Activated CD8-positive, alpha-beta memory T cell treated with anti-CD3 and anti-CD28 coated beads, Interleukin-2, amount 10 ng/mL, durations not matched to agents 7 days and 5 days (primary cell): ENCODE measurements at regions of chr6 and their contacts with region 1.

Region 1: DNA sequence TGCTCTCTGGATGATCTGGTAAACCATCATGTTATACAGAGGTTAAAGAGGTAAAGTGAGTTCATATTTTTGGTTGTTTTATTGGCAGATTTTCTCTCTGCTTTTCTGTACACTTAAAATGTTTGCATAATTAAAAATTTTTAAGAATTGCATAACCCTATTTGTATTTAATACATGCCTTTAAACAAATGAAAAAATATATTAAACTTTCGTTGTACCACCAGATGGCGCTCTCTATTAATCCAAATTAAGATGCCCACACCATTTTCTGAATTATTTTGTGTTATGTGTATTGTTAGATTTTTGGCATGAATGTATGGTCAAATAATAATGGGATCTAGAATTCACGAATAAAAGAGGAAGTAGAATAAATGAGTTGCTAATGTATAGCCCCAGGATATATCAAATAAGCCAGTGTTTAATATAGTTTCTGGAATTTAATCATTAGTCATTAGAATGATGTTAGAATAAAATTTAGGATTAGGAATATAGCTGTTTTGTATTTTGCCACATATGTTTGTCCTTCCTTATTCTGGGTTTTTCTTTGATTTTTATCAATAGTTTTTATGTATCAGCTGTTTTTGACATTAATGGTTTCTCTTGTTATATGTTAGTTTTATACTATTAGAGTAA is 38.9 kb downstream of the SMAP1 start:
- DNase-seq: no peak
- ATAC-seq: no peak
- H3K4me3 Mint-ChIP-seq: no peak overlapping the region
- H3K27ac Mint-ChIP-seq: no peak overlapping the region
- H3K4me1 Mint-ChIP-seq: peaks cover 14% of the 10 kb centered on the region
- H3K27me3 Mint-ChIP-seq: no peaks in the 10 kb centered on the region

Region 2: GRCh38 chr6:70717038-70717801 is 10.6 kb after region 1 on chr6:
- CTCF ChIA-PET with region 1: interaction called, 12 read pairs
- DNase-seq: no peak
- ATAC-seq: peak; percentile 97
- H3K4me3 Mint-ChIP-seq: no peak overlapping the region
- H3K27ac Mint-ChIP-seq: peak overlapping the region; percentile 69
- H3K4me1 Mint-ChIP-seq: peaks cover 45% of the 10 kb centered on the region
- H3K27me3 Mint-ChIP-seq: no peaks in the 10 kb centered on the region